ENCODE measurements at regions of chr11 and their contacts with region 1.

Region 1: GRCh38 chr11:33722579-33723225 is 13.5 kb downstream of the CD59 start:
- DNase-seq: peak; percentile 72
- CTCF ChIP-seq: no peak

Region 2: DNA sequence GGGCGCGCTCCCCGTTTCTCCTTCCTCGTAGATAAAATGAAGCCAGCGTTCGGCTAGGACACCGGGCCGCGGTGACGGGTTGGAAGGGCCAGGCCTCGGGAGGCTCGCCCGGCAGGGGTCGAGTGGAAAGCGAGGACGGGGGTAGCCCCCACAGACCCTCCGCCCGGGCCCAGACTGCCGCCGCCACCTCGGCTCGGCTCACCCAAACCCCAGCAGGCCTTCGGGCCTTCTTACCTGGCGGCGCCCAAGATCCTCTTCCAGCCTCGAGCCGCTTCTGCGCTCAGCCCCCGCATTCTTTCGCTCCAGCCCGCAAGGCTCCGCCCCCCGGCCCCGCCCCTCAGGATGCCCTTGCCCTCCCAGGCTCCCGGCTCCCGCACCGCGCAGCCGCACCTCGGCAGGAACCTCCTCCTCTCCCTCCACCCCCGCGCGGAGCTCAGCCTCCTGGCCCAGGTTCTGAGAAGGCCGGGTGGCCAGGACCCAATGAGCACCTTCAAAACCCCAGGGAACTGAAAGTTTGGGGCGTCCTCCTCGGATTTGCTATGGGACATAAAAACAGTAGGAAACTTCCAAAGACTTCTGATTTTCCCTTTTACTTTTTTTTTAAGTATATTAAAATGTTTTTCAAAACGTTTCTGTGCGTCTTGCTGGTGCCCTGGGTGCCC is 13.6 kb after region 1 on chr11 and contains the start of gene CD59:
- CTCF ChIA-PET with region 1: interaction called, 265 read pairs
- POLR2A ChIA-PET with region 1: no interaction called
- DNase-seq: peak; percentile 90
- CTCF ChIP-seq: no peak

Region 3: DNA sequence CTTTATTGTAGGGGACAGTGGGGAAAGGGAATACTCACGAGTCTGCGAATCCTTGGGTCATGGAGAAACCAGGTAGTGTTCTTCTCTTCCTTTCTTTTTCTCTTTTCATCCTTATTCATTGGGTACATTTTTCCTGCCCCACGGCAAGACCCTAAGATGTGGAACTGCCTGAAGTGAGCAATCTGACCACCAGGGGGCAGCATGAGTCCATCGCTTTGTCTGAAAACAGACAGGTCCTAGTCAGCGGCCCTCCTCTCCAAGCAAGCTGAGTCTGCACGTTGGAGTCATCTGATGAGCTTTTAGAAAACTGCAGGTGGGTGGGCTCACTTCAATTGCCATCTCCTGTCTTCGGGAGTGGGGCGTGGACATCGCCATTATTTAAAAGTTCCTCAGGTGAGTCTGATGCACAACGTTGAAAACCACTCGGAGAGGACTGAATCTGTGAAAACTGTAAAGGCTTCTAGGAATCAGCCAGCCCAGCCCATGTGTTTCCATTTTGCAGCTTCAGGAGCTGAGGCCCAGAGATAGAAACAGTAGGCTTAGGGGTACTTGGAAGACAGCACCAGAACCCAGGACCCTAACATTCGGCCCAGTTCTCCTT is 85.6 kb after region 1 on chr11:
- CTCF ChIA-PET with region 1: no interaction called
- POLR2A ChIA-PET with region 1: no interaction called
- DNase-seq: peak; percentile 76
- CTCF ChIP-seq: peak; percentile 96

Region 4: DNA sequence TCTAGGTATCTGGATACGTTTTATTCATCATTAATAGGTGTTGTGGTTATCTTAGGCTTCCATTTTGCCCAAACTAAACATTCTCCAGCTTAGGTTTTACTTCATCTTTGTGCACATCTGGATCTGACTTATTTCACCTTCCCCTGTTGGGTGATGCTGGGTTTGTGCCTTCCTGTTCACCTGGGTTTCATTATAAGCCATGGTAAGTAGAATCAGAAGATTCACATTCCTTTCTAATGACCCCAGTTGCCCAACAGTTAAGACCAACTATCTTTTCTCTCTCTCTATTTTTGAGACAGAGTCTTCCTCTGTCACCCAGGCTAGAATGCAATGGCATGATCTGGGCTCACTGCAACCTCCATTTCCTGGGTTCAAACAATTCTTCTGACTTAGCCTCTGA is 124.5 kb after region 1 on chr11:
- CTCF ChIA-PET with region 1: no interaction called
- POLR2A ChIA-PET with region 1: no interaction called
- DNase-seq: no peak
- CTCF ChIP-seq: no peak

Region 5: DNA sequence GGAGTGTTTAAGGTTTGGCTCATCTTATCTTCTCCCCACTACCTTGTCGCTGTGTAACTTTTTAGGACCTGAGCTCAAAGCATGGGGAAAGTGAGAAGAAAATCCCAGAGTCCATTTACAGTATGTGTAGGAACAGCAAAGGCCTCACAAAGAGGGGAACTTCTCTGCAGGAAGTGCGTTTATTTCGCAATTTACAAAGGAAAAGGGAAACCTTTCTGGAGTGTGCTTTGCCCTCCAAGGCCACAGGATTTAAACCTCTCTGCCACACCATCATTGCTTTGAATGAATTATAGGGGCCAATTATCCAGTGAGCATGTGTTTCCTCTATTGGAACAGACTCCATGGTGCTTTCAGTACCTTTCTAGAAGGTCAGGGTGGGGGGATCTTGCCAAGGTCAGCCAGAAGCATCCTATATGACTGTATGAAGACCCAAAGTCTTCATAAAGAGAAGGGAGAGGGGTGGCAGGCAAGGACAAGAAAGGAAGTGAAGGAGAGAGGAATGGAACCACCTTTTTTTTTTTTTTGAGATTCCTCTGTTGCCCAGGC is 237.2 kb after region 1 on chr11:
- CTCF ChIA-PET with region 1: no interaction called
- POLR2A ChIA-PET with region 1: no interaction called
- DNase-seq: no peak
- CTCF ChIP-seq: no peak

Measured in GM10248 (cell line).